ENCODE measurements at regions of chr10 and their contacts with region 1.

Region 1: GRCh38 chr10:62038609-62039190 is 137.2 kb downstream of the ARID5B start:
- DNase-seq: peak; percentile 61 to 87
- ATAC-seq: peak; percentile 75 to 94 (median 88)
- H3K4me3 ChIP-seq: no peak overlapping the region
- H3K4me3 Mint-ChIP-seq: peak overlapping the region; percentile 40
- H3K27ac ChIP-seq: no peak overlapping the region
- H3K27ac Mint-ChIP-seq: peak overlapping the region; percentile 22 to 77
- H3K4me1 ChIP-seq: peaks cover 4% of the 10 kb centered on the region
- H3K4me1 Mint-ChIP-seq: peaks cover 37 to 44% of the 10 kb centered on the region in 2 donors
- H3K27me3 ChIP-seq: no peaks in the 10 kb centered on the region
- H3K27me3 Mint-ChIP-seq: no peaks in the 10 kb centered on the region
- CTCF ChIP-seq: peak; percentile 74

Region 2: GRCh38 chr10:62244780-62245467 is 206.2 kb after region 1 on chr10:
- intact Hi-C with region 1: loop called (anchors 1 kb)
- DNase-seq: peak in 1 of 2 donors; percentile 84
- ATAC-seq: peak; percentile 74 to 83 (median 80)
- H3K4me3 ChIP-seq: no peak overlapping the region
- H3K4me3 Mint-ChIP-seq: no peak overlapping the region
- H3K27ac ChIP-seq: no peak overlapping the region
- H3K27ac Mint-ChIP-seq: no peak overlapping the region
- H3K4me1 ChIP-seq: no peaks in the 10 kb centered on the region
- H3K4me1 Mint-ChIP-seq: peaks cover 6 to 17% of the 10 kb centered on the region in 2 donors
- H3K27me3 ChIP-seq: no peaks in the 10 kb centered on the region
- H3K27me3 Mint-ChIP-seq: no peaks in the 10 kb centered on the region
- CTCF ChIP-seq: peak; percentile 93